ENCODE measurements at regions of chr10 and their contacts with region 1.

Region 1: GRCh38 chr10:30722956-30723620 is 93.5 kb upstream of the LYZL2 start:
- DNase-seq: no peak
- ATAC-seq: no peak
- H3K4me3 ChIP-seq: no peak overlapping the region
- H3K4me3 Mint-ChIP-seq: no peak overlapping the region
- H3K27ac ChIP-seq: no peak overlapping the region
- H3K27ac Mint-ChIP-seq: no peak overlapping the region
- H3K4me1 ChIP-seq: no peaks in the 10 kb centered on the region
- H3K4me1 Mint-ChIP-seq: peaks cover 0 to 10% (median 0%) of the 10 kb centered on the region in 7 donors
- H3K27me3 ChIP-seq: no peaks in the 10 kb centered on the region
- H3K27me3 Mint-ChIP-seq: peaks cover 0 to 4% (median 0%) of the 10 kb centered on the region in 5 donors

Region 2: DNA sequence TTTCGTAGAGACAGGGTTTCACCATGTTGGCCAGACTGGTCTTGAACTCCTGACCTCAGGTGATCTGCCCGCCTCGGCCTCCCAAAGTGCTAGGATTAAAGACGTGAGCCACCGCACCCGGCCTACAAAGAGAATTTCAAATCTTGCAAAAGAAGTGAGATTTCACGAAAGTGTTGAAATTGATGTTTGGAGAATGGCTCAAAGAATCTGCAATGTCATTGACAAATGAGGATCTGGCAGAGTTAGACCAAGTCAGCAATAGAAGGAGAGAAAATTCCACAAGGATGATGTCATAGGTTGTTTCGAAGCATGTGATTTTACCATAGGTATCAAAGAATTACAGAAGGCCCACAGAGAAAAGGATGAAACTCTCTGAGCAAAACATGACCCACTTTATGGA is 165.2 kb before region 1 on chr10:
- CTCF ChIA-PET with region 1: no interaction called
- POLR2A ChIA-PET with region 1: no interaction called
- intact Hi-C with region 1: no loop called
- DNase-seq: no peak
- ATAC-seq: peak; percentile 53
- H3K4me3 ChIP-seq: no peak overlapping the region
- H3K4me3 Mint-ChIP-seq: no peak overlapping the region
- H3K27ac ChIP-seq: no peak overlapping the region
- H3K27ac Mint-ChIP-seq: no peak overlapping the region
- H3K4me1 ChIP-seq: no peaks in the 10 kb centered on the region
- H3K4me1 Mint-ChIP-seq: peaks cover 0 to 9% (median 0%) of the 10 kb centered on the region in 7 donors
- H3K27me3 ChIP-seq: no peaks in the 10 kb centered on the region
- H3K27me3 Mint-ChIP-seq: peaks cover 0 to 18% (median 0%) of the 10 kb centered on the region in 5 donors

Region 3: DNA sequence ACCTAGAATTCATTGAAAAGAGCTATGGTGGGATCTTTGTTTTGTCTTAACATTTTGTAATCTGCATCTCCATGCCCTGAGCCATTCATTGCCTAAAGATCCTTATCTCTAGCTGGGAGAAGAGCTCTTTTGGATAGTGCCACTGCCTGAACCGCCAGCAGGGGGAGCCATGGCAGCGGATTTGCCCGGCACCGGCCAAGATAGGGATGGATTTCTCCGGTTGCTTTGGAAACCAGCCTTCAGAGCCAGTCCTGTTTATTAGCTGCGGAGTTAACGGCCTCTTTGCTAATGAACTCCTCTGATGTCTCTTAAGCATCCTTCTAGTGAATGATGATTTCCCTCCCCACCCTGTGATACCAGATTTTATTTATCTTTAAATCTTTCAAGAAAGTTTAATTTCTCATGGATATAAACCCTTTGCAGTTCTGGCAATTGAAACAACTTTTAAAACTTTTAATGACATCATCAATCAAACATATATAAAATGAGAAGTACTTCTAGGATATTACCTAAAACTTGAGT is 35.3 kb before region 1 on chr10:
- CTCF ChIA-PET with region 1: interaction called, 139 read pairs
- POLR2A ChIA-PET with region 1: interaction called, 3 read pairs
- intact Hi-C with region 1: loop called (anchors 1 kb)
- DNase-seq: peak; percentile 53 to 80 (median 67)
- ATAC-seq: peak; percentile 84
- H3K4me3 ChIP-seq: no peak overlapping the region
- H3K4me3 Mint-ChIP-seq: no peak overlapping the region
- H3K27ac ChIP-seq: no peak overlapping the region
- H3K27ac Mint-ChIP-seq: peak overlapping the region in 1 of 9 donors; percentile 47
- H3K4me1 ChIP-seq: no peaks in the 10 kb centered on the region
- H3K4me1 Mint-ChIP-seq: peaks cover 0 to 39% (median 2%) of the 10 kb centered on the region in 7 donors
- H3K27me3 ChIP-seq: no peaks in the 10 kb centered on the region
- H3K27me3 Mint-ChIP-seq: peaks cover 11 to 38% (median 28%) of the 10 kb centered on the region in 5 donors

Region 4: GRCh38 chr10:30709229-30709628 is 13.9 kb before region 1 on chr10:
- CTCF ChIA-PET with region 1: interaction called, 13 read pairs
- POLR2A ChIA-PET with region 1: no interaction called
- intact Hi-C with region 1: loop called in 1 of 2 experiments (anchors 1 kb)
- DNase-seq: no peak
- ATAC-seq: no peak
- H3K4me3 ChIP-seq: no peak overlapping the region
- H3K4me3 Mint-ChIP-seq: no peak overlapping the region
- H3K27ac ChIP-seq: no peak overlapping the region
- H3K27ac Mint-ChIP-seq: peak overlapping the region in 5 of 9 donors; percentile 3 to 73 (median 55)
- H3K4me1 ChIP-seq: peaks cover 13 to 17% of the 10 kb centered on the region in 2 donors
- H3K4me1 Mint-ChIP-seq: peaks cover 12 to 31% (median 25%) of the 10 kb centered on the region in 7 donors
- H3K27me3 ChIP-seq: no peaks in the 10 kb centered on the region
- H3K27me3 Mint-ChIP-seq: no peaks in the 10 kb centered on the region

Region 5: GRCh38 chr10:31770307-31770902 is 1047.3 kb after region 1 on chr10:
- CTCF ChIA-PET with region 1: interaction called, 4 read pairs
- POLR2A ChIA-PET with region 1: no interaction called
- intact Hi-C with region 1: loop called in 1 of 2 experiments (anchors 1 kb)
- DNase-seq: peak; percentile 27 to 69 (median 57)
- ATAC-seq: peak; percentile 92
- H3K4me3 ChIP-seq: no peak overlapping the region
- H3K4me3 Mint-ChIP-seq: no peak overlapping the region
- H3K27ac ChIP-seq: no peak overlapping the region
- H3K27ac Mint-ChIP-seq: no peak overlapping the region
- H3K4me1 ChIP-seq: no peaks in the 10 kb centered on the region
- H3K4me1 Mint-ChIP-seq: no peaks in the 10 kb centered on the region
- H3K27me3 ChIP-seq: no peaks in the 10 kb centered on the region
- H3K27me3 Mint-ChIP-seq: no peaks in the 10 kb centered on the region

Region 6: GRCh38 chr10:32005050-32005449 is 1282.0 kb after region 1 on chr10:
- CTCF ChIA-PET with region 1: no interaction called
- POLR2A ChIA-PET with region 1: no interaction called
- intact Hi-C with region 1: loop called in 1 of 2 experiments (anchors 10 kb)
- DNase-seq: peak in 7 of 9 donors; percentile 27 to 46 (median 40)
- ATAC-seq: peak; percentile 79
- H3K4me3 ChIP-seq: no peak overlapping the region
- H3K4me3 Mint-ChIP-seq: no peak overlapping the region
- H3K27ac ChIP-seq: no peak overlapping the region
- H3K27ac Mint-ChIP-seq: peak overlapping the region in 4 of 9 donors; percentile 36 to 85 (median 76)
- H3K4me1 ChIP-seq: no peaks in the 10 kb centered on the region
- H3K4me1 Mint-ChIP-seq: peaks cover 0 to 20% (median 13%) of the 10 kb centered on the region in 7 donors
- H3K27me3 ChIP-seq: no peaks in the 10 kb centered on the region
- H3K27me3 Mint-ChIP-seq: no peaks in the 10 kb centered on the region